B cell (primary cell): ENCODE measurements at regions of chr1 and their contacts with region 1.

Region 1: GRCh38 chr1:110630839-110631663 is 24.9 kb upstream of the KCNA2 start:
- DNase-seq: peak; percentile 86
- ATAC-seq: peak; percentile 76
- H3K4me3 ChIP-seq: peak overlapping the region in 2 of 5 experiments; percentile 13 to 28
- H3K4me3 Mint-ChIP-seq: no peak overlapping the region
- H3K27ac ChIP-seq: peak overlapping the region in 1 of 2 donors; percentile 65
- H3K27ac Mint-ChIP-seq: no peak overlapping the region
- H3K4me1 ChIP-seq: peaks cover 56 to 65% of the 10 kb centered on the region in 2 donors
- H3K4me1 Mint-ChIP-seq: peaks cover 43% of the 10 kb centered on the region
- H3K27me3 ChIP-seq: no peaks in the 10 kb centered on the region
- H3K27me3 Mint-ChIP-seq: no peaks in the 10 kb centered on the region
- CTCF ChIP-seq: peak; percentile 88

Region 2: DNA sequence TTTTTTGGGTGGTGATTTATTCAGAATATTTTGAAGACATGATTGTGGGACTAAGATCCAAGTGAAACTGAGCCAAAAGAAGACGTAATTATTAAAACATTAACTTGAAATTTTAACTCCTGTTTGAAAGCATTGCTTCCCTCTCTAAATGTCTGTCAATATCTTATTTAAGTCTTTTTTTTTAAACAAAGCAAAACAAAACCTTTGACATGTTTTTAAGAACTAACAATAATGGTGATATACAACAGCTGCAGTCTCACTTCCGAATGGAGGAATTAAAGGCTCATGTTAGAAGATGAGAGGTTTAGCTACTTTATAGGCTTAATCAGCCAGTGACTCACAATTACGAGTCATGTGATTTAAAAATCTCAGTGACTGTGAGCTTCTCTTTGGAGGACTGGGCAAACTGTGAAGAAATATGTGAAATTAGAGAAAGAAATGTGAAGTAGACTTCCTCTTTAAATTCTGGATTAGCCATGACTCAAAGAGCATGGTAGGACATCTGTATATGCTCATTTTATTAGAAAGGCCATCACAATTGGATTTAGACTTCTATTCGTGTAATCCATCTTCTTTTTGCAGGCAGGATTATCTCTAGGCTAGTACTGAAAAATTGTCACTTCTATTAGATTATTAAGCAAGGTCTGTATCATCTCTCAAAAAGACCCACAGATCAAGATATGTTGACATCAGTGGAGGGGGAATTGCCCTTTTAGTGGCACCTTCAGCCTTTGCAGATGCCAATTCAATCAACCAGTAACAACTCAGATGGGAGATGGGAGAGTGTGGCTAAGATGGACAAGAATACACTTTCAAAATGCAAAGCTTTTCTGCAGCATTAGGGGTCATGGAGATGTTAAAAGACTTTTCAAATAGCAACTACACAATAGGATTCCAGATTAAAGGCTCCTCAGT is 15.0 kb after region 1 on chr1:
- CTCF ChIA-PET with region 1: interaction called, 29 read pairs
- POLR2A ChIA-PET with region 1: no interaction called
- intact Hi-C with region 1: loop called (anchors 2 kb)
- DNase-seq: no peak
- ATAC-seq: no peak
- H3K4me3 ChIP-seq: no peak overlapping the region
- H3K4me3 Mint-ChIP-seq: no peak overlapping the region
- H3K27ac ChIP-seq: no peak overlapping the region
- H3K27ac Mint-ChIP-seq: no peak overlapping the region
- H3K4me1 ChIP-seq: peaks cover 13 to 15% of the 10 kb centered on the region in 2 donors
- H3K4me1 Mint-ChIP-seq: peaks cover 17% of the 10 kb centered on the region
- H3K27me3 ChIP-seq: no peaks in the 10 kb centered on the region
- H3K27me3 Mint-ChIP-seq: peaks cover 6% of the 10 kb centered on the region
- CTCF ChIP-seq: no peak

Region 3: DNA sequence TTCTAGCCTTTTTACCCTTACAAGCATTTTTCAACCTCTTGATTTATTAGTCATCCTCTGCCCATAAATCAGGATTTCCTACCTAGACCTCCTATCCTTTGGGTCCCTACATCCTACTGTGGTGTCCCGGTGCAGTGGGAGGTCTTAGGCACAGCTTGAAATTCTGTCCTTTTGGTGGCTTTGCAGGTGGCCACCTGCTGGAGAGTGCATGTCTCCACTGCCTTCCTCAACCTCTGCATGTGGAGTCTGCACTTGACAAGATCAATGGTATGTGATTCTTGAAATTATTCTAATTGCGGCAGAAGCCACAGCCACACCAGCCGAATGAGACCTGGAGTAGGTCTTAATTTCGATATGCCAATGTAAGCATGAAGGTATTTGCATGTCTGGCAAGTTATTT is 55.1 kb after region 1 on chr1:
- CTCF ChIA-PET with region 1: interaction called, 13 read pairs
- POLR2A ChIA-PET with region 1: no interaction called
- intact Hi-C with region 1: loop called (anchors 1 kb)
- DNase-seq: peak; percentile 48
- ATAC-seq: peak; percentile 78
- H3K4me3 ChIP-seq: no peak overlapping the region
- H3K4me3 Mint-ChIP-seq: no peak overlapping the region
- H3K27ac ChIP-seq: no peak overlapping the region
- H3K27ac Mint-ChIP-seq: no peak overlapping the region
- H3K4me1 ChIP-seq: no peaks in the 10 kb centered on the region
- H3K4me1 Mint-ChIP-seq: peaks cover 3% of the 10 kb centered on the region
- H3K27me3 ChIP-seq: no peaks in the 10 kb centered on the region
- H3K27me3 Mint-ChIP-seq: peaks cover 12% of the 10 kb centered on the region
- CTCF ChIP-seq: peak; percentile 31